ENCODE measurements at regions of chr12 and their contacts with region 1.

Region 1: GRCh38 chr12:65313719-65314317 is 35.3 kb downstream of the MSRB3 start:
- DNase-seq: no peak
- H3K4me3 Mint-ChIP-seq: no peak overlapping the region
- H3K27ac Mint-ChIP-seq: no peak overlapping the region
- H3K4me1 Mint-ChIP-seq: peaks cover 6% of the 10 kb centered on the region
- H3K27me3 Mint-ChIP-seq: no peaks in the 10 kb centered on the region
- CTCF ChIP-seq: peak; percentile 43

Region 2: GRCh38 chr12:65673732-65674131 is 359.9 kb after region 1 on chr12:
- CTCF ChIA-PET with region 1: no interaction called
- intact Hi-C with region 1: loop called (anchors 1 kb)
- DNase-seq: no peak
- H3K4me3 Mint-ChIP-seq: no peak overlapping the region
- H3K27ac Mint-ChIP-seq: peak overlapping the region; percentile 85
- H3K4me1 Mint-ChIP-seq: peaks cover 38% of the 10 kb centered on the region
- H3K27me3 Mint-ChIP-seq: no peaks in the 10 kb centered on the region
- CTCF ChIP-seq: no peak

Region 3: GRCh38 chr12:66087365-66087943 is 773.6 kb after region 1 on chr12:
- CTCF ChIA-PET with region 1: no interaction called
- intact Hi-C with region 1: loop called (anchors 2 kb)
- DNase-seq: peak; percentile 72
- H3K4me3 Mint-ChIP-seq: no peak overlapping the region
- H3K27ac Mint-ChIP-seq: no peak overlapping the region
- H3K4me1 Mint-ChIP-seq: peaks cover under 1% of the 10 kb centered on the region
- H3K27me3 Mint-ChIP-seq: no peaks in the 10 kb centered on the region
- CTCF ChIP-seq: peak; percentile 68

Measured in Calu3 (cell line).